BJ (cell line): ENCODE measurements at regions of chr11 and their contacts with region 1.

Region 1: GRCh38 chr11:94973099-94973968 is at the starts of genes CWC15 and KDM4D:
- DNase-seq: peak; percentile 66
- H3K4me3 ChIP-seq: peak within 1 kb of the TSS; percentile 100
- H3K27me3 ChIP-seq: no peaks in the 10 kb centered on the region
- CTCF ChIP-seq: 0 out of 2 replicates have a peak, but pooled peaks have one; percentile 1
- polyA plus RNA-seq, gene CWC15: 24.9 and 54.7 TPM in 2 replicates
- polyA plus RNA-seq, gene KDM4D: 0.97 and 1.1 TPM in 2 replicates

Region 2: GRCh38 chr11:94909371-94909820 is 63.9 kb before region 1 on chr11:
- CTCF ChIA-PET with region 1: interaction called, 13 read pairs
- POLR2A ChIA-PET with region 1: no interaction called
- DNase-seq: no peak
- H3K4me3 ChIP-seq: no peak overlapping the region
- H3K27me3 ChIP-seq: no peaks in the 10 kb centered on the region
- CTCF ChIP-seq: no peak

Region 3: GRCh38 chr11:94922310-94923003 is 50.9 kb before region 1 on chr11:
- CTCF ChIA-PET with region 1: no interaction called
- POLR2A ChIA-PET with region 1: no interaction called
- DNase-seq: no peak
- H3K4me3 ChIP-seq: no peak overlapping the region
- H3K27me3 ChIP-seq: no peaks in the 10 kb centered on the region
- CTCF ChIP-seq: no peak